ENCODE measurements at regions of chr11 and their contacts with region 1.

Region 1: DNA sequence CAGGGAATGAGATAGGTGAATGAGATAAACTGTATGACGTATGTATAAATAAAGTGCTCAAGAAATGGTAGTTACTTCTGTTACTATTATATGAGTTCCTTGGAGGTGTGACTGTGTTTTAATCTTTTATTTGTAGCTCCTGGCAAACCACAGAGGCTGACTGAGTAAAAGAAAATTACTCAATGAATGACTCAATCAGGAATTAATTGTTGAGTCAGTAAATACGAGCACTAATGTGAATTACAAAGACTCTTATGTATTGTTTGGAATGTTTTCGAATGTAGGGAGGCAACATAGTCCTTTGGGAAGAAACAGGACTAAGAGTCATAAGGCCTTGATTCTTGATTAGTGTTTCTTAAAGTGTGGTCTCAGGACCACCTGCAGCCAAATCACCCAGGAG is 51.1 kb upstream of the BLID start:
- DNase-seq: peak; percentile 83
- H3K4me3 ChIP-seq: no peak overlapping the region
- H3K27ac ChIP-seq: peak overlapping the region; percentile 74
- H3K4me1 ChIP-seq: peaks cover 58% of the 10 kb centered on the region
- H3K27me3 ChIP-seq: no peaks in the 10 kb centered on the region
- CTCF ChIP-seq: no peak
- POLR2A ChIP-seq: no peak

Region 2: GRCh38 chr11:122179961-122180834 is 13.1 kb after region 1 on chr11:
- CTCF ChIA-PET with region 1: interaction called, 17 read pairs
- POLR2A ChIA-PET with region 1: interaction called, 3 read pairs
- dilution Hi-C with region 1: no loop called
- intact Hi-C with region 1: loop called (anchors 1 kb)
- DNase-seq: peak; percentile 87
- H3K4me3 ChIP-seq: peak overlapping the region; percentile 29 to 100 (median 99)
- H3K27ac ChIP-seq: peak overlapping the region; percentile 86
- H3K4me1 ChIP-seq: peaks cover 66% of the 10 kb centered on the region
- H3K27me3 ChIP-seq: no peaks in the 10 kb centered on the region
- CTCF ChIP-seq: no peak
- POLR2A ChIP-seq: peak; percentile 84

Region 3: DNA sequence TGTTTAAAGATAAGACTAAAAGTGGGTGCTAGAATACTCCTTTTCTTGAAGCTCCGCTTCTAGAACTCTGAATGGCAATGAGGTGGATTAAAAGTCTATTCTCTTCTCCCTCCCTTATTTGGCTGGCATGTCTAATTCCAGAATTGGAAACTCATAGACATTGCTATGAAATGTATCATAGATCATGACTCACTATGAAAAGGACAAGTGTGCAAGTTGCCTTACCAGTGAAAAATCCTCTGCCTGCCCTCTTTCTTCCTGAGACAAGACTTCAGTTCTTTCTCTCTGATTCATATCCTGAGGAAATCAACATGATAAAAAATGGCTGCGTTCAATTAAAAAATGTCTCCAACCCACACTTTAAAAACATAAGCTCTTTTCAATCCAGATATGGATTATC is 22.1 kb after region 1 on chr11:
- CTCF ChIA-PET with region 1: interaction called, 4 read pairs
- POLR2A ChIA-PET with region 1: no interaction called
- dilution Hi-C with region 1: no loop called
- intact Hi-C with region 1: loop called (anchors 1 kb)
- DNase-seq: peak; percentile 94
- H3K4me3 ChIP-seq: peak overlapping the region in 1 of 3 experiments; percentile 7
- H3K27ac ChIP-seq: peak overlapping the region; percentile 85
- H3K4me1 ChIP-seq: peaks cover 58% of the 10 kb centered on the region
- H3K27me3 ChIP-seq: no peaks in the 10 kb centered on the region
- CTCF ChIP-seq: no peak
- POLR2A ChIP-seq: peak; percentile 57

Region 4: GRCh38 chr11:123238297-123238696 is 1071.2 kb after region 1 on chr11:
- CTCF ChIA-PET with region 1: no interaction called
- POLR2A ChIA-PET with region 1: no interaction called
- dilution Hi-C with region 1: no loop called
- intact Hi-C with region 1: no loop called
- DNase-seq: no peak
- H3K4me3 ChIP-seq: no peak overlapping the region
- H3K27ac ChIP-seq: no peak overlapping the region
- H3K4me1 ChIP-seq: no peaks in the 10 kb centered on the region
- H3K27me3 ChIP-seq: peaks cover 0 to 4% of the 10 kb centered on the region in 2 experiments
- CTCF ChIP-seq: no peak
- POLR2A ChIP-seq: no peak

Measured in endothelial cell of umbilical vein (primary cell).